Spleen (tissue), 13 donors: ENCODE measurements at regions of chr7 and their contacts with region 1.

Region 1: DNA sequence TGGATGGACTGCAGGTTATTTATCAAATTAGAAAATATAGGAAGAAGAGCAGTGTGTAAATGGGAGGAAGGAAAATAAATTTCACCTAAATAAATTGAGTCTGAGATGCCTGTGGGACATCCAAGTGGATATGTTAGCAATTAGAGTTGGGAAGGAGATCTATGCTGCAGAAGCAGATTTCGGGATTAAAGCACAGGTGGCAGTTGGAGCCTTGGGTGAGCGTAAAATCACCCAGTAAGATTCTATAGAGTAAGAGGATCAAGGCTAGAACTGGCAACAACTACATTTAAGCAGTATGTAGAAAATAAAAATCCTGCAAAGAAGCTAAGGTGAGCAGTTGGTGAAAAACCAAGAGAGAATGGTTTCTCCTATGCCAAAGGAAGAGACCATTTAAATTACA is 8.4 kb downstream of the TRIM4 start:
- DNase-seq: no peak
- H3K4me3 ChIP-seq: no peak overlapping the region
- H3K27ac ChIP-seq: no peak overlapping the region
- H3K4me1 ChIP-seq: peaks cover under 1 to 57% (median 36%) of the 10 kb centered on the region in 6 donors
- H3K27me3 ChIP-seq: no peaks in the 10 kb centered on the region
- CTCF ChIP-seq: no peak
- POLR2A ChIP-seq: no peak

Region 2: GRCh38 chr7:99990460-99990852 is 79.5 kb after region 1 on chr7:
- intact Hi-C with region 1: loop called (anchors 5 kb)
- DNase-seq: peak; percentile 44
- H3K4me3 ChIP-seq: peak overlapping the region in 1 of 8 donors; percentile 31
- H3K27ac ChIP-seq: no peak overlapping the region
- H3K4me1 ChIP-seq: peaks cover 0 to 42% (median 26%) of the 10 kb centered on the region in 6 donors
- H3K27me3 ChIP-seq: peaks cover 0 to 16% (median 0%) of the 10 kb centered on the region in 7 donors
- CTCF ChIP-seq: no peak
- POLR2A ChIP-seq: no peak